ENCODE measurements at regions of chr1 and their contacts with region 1.

Region 1: DNA sequence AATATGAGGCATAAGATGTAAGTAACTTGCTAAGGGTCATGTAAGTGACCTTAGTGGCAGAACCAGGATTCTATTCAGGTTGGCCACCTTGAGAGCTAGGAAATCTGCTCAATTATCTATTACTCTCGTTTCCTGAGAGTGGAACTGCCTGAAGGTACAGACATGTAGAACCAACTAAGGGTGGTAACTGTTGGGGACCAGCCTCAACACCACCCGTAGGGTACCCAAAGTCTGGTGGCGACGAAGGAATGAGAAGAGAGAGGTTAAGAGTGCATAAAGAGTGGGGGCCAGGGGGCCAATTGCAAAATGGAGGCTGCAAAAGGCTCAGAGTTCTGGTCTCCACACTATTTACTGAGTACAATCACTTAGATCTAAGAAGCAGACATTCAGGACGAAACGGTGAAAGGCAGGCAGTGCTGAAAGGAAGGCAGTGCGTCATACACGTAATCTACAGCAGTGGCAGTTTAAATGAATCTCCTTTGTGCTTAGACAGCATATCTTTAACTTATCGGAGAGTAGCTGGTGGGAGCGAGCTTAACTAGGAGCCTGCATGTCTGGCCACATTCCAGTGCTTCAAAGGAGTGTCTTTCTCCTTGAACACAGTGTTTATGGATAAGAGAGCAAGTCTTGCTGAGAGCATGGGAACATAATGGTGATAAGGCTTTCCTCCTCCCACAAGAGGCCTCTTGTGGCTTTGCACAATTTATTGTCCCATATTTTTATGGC is 25.0 kb downstream of the SRSF4 start:
- DNase-seq: no peak
- H3K4me3 ChIP-seq: no peak overlapping the region
- H3K4me3 Mint-ChIP-seq: no peak overlapping the region
- H3K27ac ChIP-seq: no peak overlapping the region
- H3K27ac Mint-ChIP-seq: peak overlapping the region in 2 of 7 donors; percentile 2 to 53
- H3K4me1 ChIP-seq: peaks cover under 1% of the 10 kb centered on the region
- H3K4me1 Mint-ChIP-seq: peaks cover 0 to 5% (median 2%) of the 10 kb centered on the region in 4 donors
- H3K27me3 ChIP-seq: no peaks in the 10 kb centered on the region
- H3K27me3 Mint-ChIP-seq: no peaks in the 10 kb centered on the region

Region 2: GRCh38 chr1:29202584-29203340 is 46.1 kb after region 1 on chr1:
- CTCF ChIA-PET with region 1: interaction called, 11 read pairs
- POLR2A ChIA-PET with region 1: no interaction called
- intact Hi-C with region 1: no loop called
- DNase-seq: peak; percentile 73 to 81 (median 76)
- H3K4me3 ChIP-seq: no peak overlapping the region
- H3K4me3 Mint-ChIP-seq: no peak overlapping the region
- H3K27ac ChIP-seq: no peak overlapping the region
- H3K27ac Mint-ChIP-seq: peak overlapping the region in 2 of 7 donors; percentile 12 to 24
- H3K4me1 ChIP-seq: no peaks in the 10 kb centered on the region
- H3K4me1 Mint-ChIP-seq: peaks cover 0 to 7% (median 2%) of the 10 kb centered on the region in 4 donors
- H3K27me3 ChIP-seq: no peaks in the 10 kb centered on the region
- H3K27me3 Mint-ChIP-seq: no peaks in the 10 kb centered on the region

Region 3: GRCh38 chr1:29752141-29752540 is 595.4 kb after region 1 on chr1:
- CTCF ChIA-PET with region 1: no interaction called
- POLR2A ChIA-PET with region 1: no interaction called
- intact Hi-C with region 1: no loop called
- DNase-seq: no peak
- H3K4me3 ChIP-seq: no peak overlapping the region
- H3K4me3 Mint-ChIP-seq: no peak overlapping the region
- H3K27ac ChIP-seq: no peak overlapping the region
- H3K27ac Mint-ChIP-seq: no peak overlapping the region
- H3K4me1 ChIP-seq: no peaks in the 10 kb centered on the region
- H3K4me1 Mint-ChIP-seq: no peaks in the 10 kb centered on the region
- H3K27me3 ChIP-seq: no peaks in the 10 kb centered on the region
- H3K27me3 Mint-ChIP-seq: peaks cover 1 to 12% of the 10 kb centered on the region in 2 donors

Measured in CD4-positive, alpha-beta memory T cell (primary cell).